Right ventricle myocardium inferior (tissue), 1 donor: ENCODE measurements at regions of chr14 and their contacts with region 1.

Region 1: GRCh38 chr14:90087433-90087832 is 25.6 kb downstream of the KCNK13 start:
- DNase-seq: no peak
- ATAC-seq: peak; percentile 95

Region 2: GRCh38 chr14:90072350-90072749 is 15.1 kb before region 1 on chr14:
- intact Hi-C with region 1: loop called (anchors 2 kb)
- DNase-seq: no peak
- ATAC-seq: peak; percentile 92